AG04450 (cell line): ENCODE measurements at regions of chr1 and their contacts with region 1.

Region 1: GRCh38 chr1:11838349-11839272 is 9.0 kb downstream of the NPPA start:
- DNase-seq: no peak
- H3K4me3 ChIP-seq: no peak overlapping the region
- H3K27ac ChIP-seq: no peak overlapping the region
- H3K27me3 ChIP-seq: no peaks in the 10 kb centered on the region
- CTCF ChIP-seq: peak; percentile 99

Region 2: DNA sequence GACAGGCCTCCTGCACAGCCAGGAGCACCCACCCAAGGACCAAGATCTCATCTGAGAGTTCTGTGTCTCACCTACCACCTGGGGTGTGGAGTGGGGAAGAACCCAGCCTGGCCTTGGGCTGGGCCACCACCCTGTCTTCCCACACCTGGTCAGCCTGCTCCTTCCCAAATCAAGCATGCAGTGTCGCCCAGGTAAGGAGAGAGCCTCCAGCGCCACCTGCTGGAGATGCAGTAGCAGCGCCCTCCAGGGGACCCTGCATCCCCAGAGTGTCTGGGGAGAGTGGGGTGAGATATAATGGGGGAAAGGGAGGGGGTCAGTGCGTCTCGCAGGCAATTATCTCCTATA is 55.3 kb after region 1 on chr1:
- CTCF ChIA-PET with region 1: interaction called, 19 read pairs
- POLR2A ChIA-PET with region 1: no interaction called
- DNase-seq: no peak
- H3K4me3 ChIP-seq: no peak overlapping the region
- H3K27ac ChIP-seq: no peak overlapping the region
- H3K27me3 ChIP-seq: peaks cover 33% of the 10 kb centered on the region
- CTCF ChIP-seq: peak; percentile 93

Region 3: GRCh38 chr1:12134716-12135115 is 296.1 kb after region 1 on chr1:
- CTCF ChIA-PET with region 1: interaction called, 12 read pairs
- POLR2A ChIA-PET with region 1: no interaction called
- DNase-seq: no peak
- H3K4me3 ChIP-seq: no peak overlapping the region
- H3K27ac ChIP-seq: no peak overlapping the region
- H3K27me3 ChIP-seq: peaks cover 2% of the 10 kb centered on the region
- CTCF ChIP-seq: no peak